Activated CD4-positive, alpha-beta T cell treated with anti-CD3 and anti-CD28 coated beads for 36 hours (primary cell): ENCODE measurements at regions of chr7 and their contacts with region 1.

Region 1: DNA sequence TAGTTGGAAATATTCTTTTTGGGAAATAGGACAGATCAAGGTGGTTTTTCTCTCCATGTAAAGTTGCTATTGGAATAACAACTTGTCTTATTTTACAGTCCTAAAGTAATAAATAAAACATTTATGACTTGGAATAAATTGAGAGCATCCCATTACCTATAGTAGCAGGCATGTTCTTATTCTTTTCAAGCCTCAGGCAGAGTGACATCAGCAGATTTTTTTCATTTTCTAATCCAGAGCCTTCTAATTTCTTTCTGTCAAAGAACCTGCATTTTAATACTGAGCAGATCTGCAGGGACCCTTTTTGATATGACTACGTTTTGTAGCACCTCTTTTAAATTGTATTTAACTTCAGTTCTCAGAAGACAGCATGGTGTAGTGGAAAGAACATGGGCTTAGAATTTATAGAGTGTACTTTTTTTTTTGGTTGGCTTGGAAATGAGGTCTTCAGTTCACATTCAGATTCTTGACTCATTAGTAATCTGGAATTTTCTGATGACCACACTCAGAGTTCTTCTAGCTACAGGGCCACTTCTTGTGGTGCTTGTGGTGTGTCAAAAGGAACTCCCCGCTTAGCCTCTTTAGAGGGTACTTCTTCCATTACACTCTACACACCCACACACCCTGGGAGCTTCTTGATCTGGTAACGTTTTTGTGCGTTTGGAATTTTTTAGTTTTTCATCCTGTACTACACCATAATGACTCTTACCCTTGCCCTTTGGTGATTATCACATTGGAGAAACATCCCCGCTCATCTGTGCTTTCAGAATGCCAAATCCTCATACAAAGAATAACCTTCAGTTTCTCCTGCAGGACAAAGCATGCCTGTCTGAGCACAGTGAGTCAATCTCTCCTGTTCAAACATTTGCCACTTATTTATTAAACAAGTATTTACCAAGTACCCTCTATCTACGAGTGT is 34.6 kb downstream of the AGK start:
- DNase-seq: peak; percentile 67
- ATAC-seq: peak; percentile 86
- H3K4me3 Mint-ChIP-seq: peak overlapping the region; percentile 3
- H3K27ac Mint-ChIP-seq: peak overlapping the region; percentile 69
- H3K4me1 Mint-ChIP-seq: peaks cover 43% of the 10 kb centered on the region
- H3K27me3 Mint-ChIP-seq: no peaks in the 10 kb centered on the region

Region 2: DNA sequence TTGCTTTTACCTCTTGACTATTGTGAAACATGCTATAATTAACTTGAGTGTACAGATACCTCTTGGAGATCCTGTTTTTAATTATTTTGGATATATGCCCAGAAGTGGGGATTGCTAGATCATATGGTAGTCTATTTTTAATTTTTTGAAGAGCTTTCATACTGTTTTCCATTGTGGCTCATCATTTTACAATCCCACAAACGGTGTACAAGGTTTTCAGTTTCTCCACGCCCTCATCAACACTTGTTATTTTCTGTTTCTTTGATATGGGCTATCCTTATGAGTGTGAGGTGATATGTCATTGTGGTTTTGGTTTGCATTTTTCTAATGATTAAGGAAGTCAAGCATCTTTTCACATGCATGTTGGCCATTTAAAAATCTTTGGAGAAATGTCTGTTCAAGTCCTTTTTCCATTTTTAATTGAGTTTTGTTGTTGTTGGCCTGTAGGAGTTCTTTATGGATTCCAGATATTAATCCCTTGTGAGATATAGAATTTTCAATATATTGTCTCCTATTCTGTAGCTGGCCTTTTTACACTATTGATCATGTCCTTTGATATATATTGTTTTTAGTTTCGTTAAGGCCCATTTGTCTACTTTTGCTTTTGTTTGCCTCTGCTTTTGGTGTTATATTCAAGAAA is 27.2 kb before region 1 on chr7:
- CTCF ChIA-PET with region 1: no interaction called
- POLR2A ChIA-PET with region 1: interaction called, 3 read pairs
- intact Hi-C with region 1: loop called (anchors 1 kb)
- DNase-seq: no peak
- ATAC-seq: peak; percentile 94
- H3K4me3 Mint-ChIP-seq: no peak overlapping the region
- H3K27ac Mint-ChIP-seq: peak overlapping the region; percentile 65
- H3K4me1 Mint-ChIP-seq: peaks cover 64% of the 10 kb centered on the region
- H3K27me3 Mint-ChIP-seq: no peaks in the 10 kb centered on the region

Region 3: GRCh38 chr7:141563956-141564631 is 21.8 kb before region 1 on chr7:
- CTCF ChIA-PET with region 1: no interaction called
- POLR2A ChIA-PET with region 1: no interaction called
- intact Hi-C with region 1: loop called (anchors 1 to 2 kb)
- DNase-seq: peak; percentile 64
- ATAC-seq: peak; percentile 97
- H3K4me3 Mint-ChIP-seq: no peak overlapping the region
- H3K27ac Mint-ChIP-seq: peak overlapping the region; percentile 73
- H3K4me1 Mint-ChIP-seq: peaks cover 58% of the 10 kb centered on the region
- H3K27me3 Mint-ChIP-seq: no peaks in the 10 kb centered on the region